RWPE1 (cell line): ENCODE measurements at regions of chr1 and their contacts with region 1.

Region 1: GRCh38 chr1:32892368-32893197 is 6.3 kb downstream of the HPCA start:
- DNase-seq: peak; percentile 35
- H3K27ac ChIP-seq: no peak overlapping the region
- CTCF ChIP-seq: peak; percentile 74

Region 2: DNA sequence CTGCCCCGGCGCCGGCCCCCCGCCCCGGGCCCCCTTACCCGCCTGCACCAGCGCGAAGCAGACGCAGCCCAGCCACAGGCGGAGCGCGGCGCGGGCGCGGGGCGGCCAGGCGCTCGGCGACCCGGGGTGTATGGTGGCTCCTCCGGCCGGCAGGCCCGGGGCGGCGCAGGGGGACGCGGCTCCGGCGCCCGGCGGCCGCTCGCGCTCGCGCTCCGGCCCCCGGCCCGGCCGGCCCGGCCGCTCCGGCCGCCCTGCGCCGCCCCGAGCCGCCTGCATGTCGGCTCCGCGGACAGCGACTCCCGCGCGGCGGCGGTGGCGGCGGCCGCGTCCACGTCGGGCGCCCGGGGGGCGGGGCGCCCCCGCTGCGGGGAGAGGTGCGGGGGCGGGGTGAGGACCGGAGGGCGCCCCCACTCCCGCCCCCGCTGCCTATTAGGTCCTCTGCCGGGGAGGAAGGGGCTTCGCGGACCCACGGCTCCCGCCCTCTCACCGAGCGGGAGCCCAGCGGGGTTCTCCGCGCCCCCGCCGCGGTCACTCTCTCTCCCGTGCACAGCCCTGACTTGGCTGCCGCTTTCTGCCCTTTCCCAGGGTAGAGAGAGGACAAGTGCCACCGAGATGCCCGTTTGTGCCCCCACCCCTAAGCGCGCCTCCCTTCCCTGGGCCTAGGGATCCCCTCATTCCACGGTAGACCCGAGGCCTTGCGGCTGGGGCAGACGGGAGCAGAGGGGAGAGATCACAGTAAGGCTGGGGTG is 21.8 kb before region 1 on chr1 and contains the start of gene FNDC5:
- CTCF ChIA-PET with region 1: interaction called, 11 read pairs
- POLR2A ChIA-PET with region 1: no interaction called
- DNase-seq: no peak
- H3K27ac ChIP-seq: no peak within 1 kb of the TSS
- CTCF ChIP-seq: no peak